Psoas muscle (tissue), 8 donors: ENCODE measurements at regions of chr15 and their contacts with region 1.

Region 1: DNA sequence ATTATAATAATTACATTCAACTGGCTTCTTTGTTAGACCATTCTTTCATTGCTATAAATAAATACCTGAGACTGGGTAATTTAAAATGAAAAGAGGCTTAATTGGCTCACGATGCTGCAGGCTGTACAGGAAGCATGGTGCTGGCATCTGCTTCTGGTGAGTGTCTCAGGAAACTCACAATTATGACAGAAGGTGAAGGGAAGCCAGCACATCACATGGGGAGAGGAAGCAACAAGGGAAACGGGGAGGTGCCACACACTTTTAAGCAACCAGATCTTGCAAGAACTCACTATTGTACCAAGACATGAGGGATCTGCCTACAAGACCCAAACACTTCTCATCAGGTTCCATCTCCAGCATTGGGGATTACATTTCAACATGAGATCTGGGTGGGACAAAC is 413.1 kb upstream of the ARRDC4 start:
- DNase-seq: no peak
- ATAC-seq: no peak
- H3K4me3 ChIP-seq: no peak overlapping the region
- H3K27ac ChIP-seq: no peak overlapping the region
- H3K4me1 ChIP-seq: no peaks in the 10 kb centered on the region
- H3K27me3 ChIP-seq: no peaks in the 10 kb centered on the region
- CTCF ChIP-seq: no peak

Region 2: GRCh38 chr15:97316362-97316761 is 231.0 kb before region 1 on chr15:
- intact Hi-C with region 1: loop called in 1 of 2 experiments (anchors 5 kb)
- DNase-seq: no peak
- ATAC-seq: peak in 1 of 4 donors; percentile 30
- H3K4me3 ChIP-seq: no peak overlapping the region
- H3K27ac ChIP-seq: no peak overlapping the region
- H3K4me1 ChIP-seq: no peaks in the 10 kb centered on the region
- H3K27me3 ChIP-seq: no peaks in the 10 kb centered on the region
- CTCF ChIP-seq: no peak

Region 3: GRCh38 chr15:97479957-97480356 is 67.4 kb before region 1 on chr15:
- intact Hi-C with region 1: no loop called
- DNase-seq: no peak
- ATAC-seq: no peak
- H3K4me3 ChIP-seq: no peak overlapping the region
- H3K27ac ChIP-seq: no peak overlapping the region
- H3K4me1 ChIP-seq: no peaks in the 10 kb centered on the region
- H3K27me3 ChIP-seq: no peaks in the 10 kb centered on the region
- CTCF ChIP-seq: no peak

Region 4: GRCh38 chr15:97576929-97577645 is 29.7 kb after region 1 on chr15:
- intact Hi-C with region 1: no loop called
- DNase-seq: no peak
- ATAC-seq: no peak
- H3K4me3 ChIP-seq: no peak overlapping the region
- H3K27ac ChIP-seq: no peak overlapping the region
- H3K4me1 ChIP-seq: no peaks in the 10 kb centered on the region
- H3K27me3 ChIP-seq: no peaks in the 10 kb centered on the region
- CTCF ChIP-seq: no peak